ENCODE measurements at regions of chr10 and their contacts with region 1.

Region 1: DNA sequence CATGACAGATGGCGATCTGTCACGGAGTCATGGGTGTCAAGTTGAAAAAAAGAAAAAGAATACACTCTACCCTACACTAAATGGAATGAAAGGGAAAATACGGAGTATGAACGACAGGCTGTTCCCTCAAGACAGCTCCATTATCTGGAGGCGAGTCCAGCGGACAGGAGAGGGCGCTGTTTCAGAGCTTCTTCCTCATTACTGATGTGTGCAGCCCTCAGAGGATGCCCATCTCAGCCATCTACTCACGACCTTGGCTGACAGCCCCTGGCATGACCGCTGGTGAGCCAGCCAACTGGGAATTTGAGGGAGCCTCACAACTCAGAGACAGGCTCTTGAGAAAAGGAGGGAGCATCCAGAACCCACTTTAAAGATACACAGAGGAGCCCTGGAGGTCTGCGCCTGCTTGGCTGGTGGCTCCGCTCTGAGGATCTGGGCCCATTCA is 49.6 kb upstream of the SMNDC1 start:
- DNase-seq: peak; percentile 93
- H3K4me3 Mint-ChIP-seq: peak overlapping the region; percentile 82
- H3K27ac Mint-ChIP-seq: peak overlapping the region; percentile 98
- H3K4me1 Mint-ChIP-seq: peaks cover 79% of the 10 kb centered on the region
- H3K27me3 Mint-ChIP-seq: no peaks in the 10 kb centered on the region

Region 2: GRCh38 chr10:110007701-110008517 is 346.4 kb before region 1 on chr10 and contains the start of gene ADD3:
- CTCF ChIA-PET with region 1: no interaction called
- POLR2A ChIA-PET with region 1: no interaction called
- intact Hi-C with region 1: loop called (anchors 5 kb)
- DNase-seq: peak; percentile 92
- H3K4me3 Mint-ChIP-seq: no peak within 1 kb of the TSS
- H3K27ac Mint-ChIP-seq: peak within 1 kb of the TSS; percentile 81
- H3K4me1 Mint-ChIP-seq: peaks cover 40% of the 10 kb centered on the region
- H3K27me3 Mint-ChIP-seq: no peaks in the 10 kb centered on the region
- total RNA-seq, gene ADD3: 92.3 to 93.3 TPM

Region 3: DNA sequence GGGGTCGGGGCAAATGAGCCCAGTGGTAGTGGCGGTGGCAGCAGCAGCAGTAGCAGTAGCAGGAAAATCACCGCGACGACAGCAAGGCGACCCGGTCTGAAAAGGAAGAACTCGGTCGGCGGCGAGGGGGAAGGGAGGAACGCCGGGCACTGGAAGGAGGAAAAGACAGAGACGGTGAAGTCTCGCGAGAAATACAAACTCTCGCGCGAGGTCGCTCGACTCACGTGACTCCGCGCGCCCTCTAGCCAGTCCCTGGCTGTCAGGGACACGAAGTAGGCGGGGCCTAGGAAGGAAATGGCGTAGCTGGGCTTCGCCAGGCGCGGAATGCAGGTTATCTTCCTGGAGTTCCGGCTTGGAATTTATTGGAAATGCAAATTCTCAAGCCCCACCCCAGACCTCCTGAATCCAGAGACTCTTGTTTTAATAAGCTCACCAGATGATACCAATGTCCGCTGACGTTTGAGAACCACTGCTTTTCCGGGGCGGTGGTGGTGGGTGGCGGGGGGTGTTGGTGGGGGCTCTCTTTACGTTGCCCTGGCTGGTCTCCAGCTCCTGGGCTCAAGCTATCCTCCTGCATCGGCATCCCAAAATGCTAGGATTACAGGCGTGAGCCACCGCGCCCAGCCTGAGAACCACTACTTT is 49.4 kb before region 1 on chr10 and contains the start of gene SMNDC1:
- CTCF ChIA-PET with region 1: interaction called, 21 read pairs
- POLR2A ChIA-PET with region 1: interaction called, 4 read pairs
- intact Hi-C with region 1: loop called (anchors 1 kb)
- DNase-seq: peak; percentile 99
- H3K4me3 Mint-ChIP-seq: peak within 1 kb of the TSS; percentile 93
- H3K27ac Mint-ChIP-seq: peak within 1 kb of the TSS; percentile 97
- H3K4me1 Mint-ChIP-seq: peaks cover 49% of the 10 kb centered on the region
- H3K27me3 Mint-ChIP-seq: no peaks in the 10 kb centered on the region
- total RNA-seq, gene SMNDC1: 44.1 to 48.3 TPM

Region 4: DNA sequence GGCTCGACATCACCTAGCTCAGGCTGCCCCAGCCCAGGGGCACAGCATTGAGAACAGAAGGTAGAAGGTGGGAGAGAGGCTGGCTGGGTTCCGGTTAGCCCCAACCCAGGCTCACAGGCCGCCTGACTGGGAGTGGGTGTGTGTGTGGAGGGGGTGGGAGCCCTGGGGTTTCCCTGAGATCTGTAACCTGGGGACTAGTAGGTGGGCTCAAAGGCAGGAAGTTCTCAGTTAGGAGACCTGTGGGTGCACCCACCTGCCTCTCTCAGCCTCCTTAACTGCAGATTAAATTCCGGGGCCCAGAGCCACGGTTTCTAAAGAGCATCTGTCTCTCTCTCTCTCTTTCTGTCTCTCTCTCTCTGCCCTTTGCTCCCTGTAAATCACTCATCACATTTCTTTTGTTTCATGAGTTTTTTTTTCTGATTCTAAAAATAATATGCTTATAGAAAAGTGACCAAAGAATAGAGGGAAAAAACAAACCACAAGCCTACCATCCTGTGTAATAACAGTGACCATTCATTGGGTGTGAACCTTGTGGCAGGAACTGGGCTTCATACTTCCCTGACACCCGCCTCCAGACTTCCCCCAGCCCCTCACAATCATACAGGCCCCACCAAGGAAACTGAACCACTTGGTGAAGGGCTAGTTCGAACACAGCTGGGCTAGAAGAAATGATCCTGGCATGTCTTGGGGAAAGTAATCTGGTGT is 33.8 kb after region 1 on chr10:
- CTCF ChIA-PET with region 1: interaction called, 7 read pairs
- POLR2A ChIA-PET with region 1: interaction called, 4 read pairs
- intact Hi-C with region 1: loop called (anchors 1 kb)
- DNase-seq: peak; percentile 65
- H3K4me3 Mint-ChIP-seq: no peak overlapping the region
- H3K27ac Mint-ChIP-seq: peak overlapping the region; percentile 86
- H3K4me1 Mint-ChIP-seq: peaks cover 25% of the 10 kb centered on the region
- H3K27me3 Mint-ChIP-seq: no peaks in the 10 kb centered on the region

Region 5: DNA sequence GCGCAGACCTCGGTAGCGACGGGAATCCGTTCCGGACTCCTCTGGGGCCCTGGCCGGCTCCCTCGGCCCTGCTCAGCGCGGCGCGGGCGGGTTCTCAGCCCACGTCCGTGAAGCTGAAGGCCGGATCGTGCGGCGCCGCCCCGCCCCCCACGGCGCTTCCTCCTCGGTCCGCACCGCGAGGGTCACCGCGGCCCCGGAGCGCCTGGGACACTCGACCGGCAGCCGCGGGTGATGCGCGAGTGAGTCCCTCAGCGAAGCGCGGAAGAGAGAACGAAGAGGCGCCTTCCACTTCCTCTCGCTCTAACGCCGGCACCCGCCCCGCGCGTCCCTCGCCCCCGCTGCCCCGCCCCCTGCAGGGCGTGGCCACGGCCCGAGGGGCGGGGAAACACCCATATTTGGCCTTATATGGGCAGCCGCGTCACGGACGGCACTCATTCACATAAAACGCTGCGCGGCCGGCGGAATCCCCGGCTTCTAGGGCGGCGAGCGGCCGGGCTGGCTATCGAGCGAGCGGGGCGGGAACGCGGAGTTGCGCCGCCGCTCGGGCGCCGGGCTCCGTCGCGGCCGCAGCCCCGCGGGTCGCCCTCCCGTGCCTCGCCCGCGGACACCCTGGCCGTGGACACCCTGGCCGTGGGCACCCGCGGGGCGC is 143.2 kb after region 1 on chr10 and contains the start of gene DUSP5:
- CTCF ChIA-PET with region 1: interaction called, 221 read pairs
- POLR2A ChIA-PET with region 1: interaction called, 112 read pairs
- intact Hi-C with region 1: loop called (anchors 1 kb)
- DNase-seq: peak; percentile 97
- H3K4me3 Mint-ChIP-seq: peak within 1 kb of the TSS; percentile 96
- H3K27ac Mint-ChIP-seq: peak within 1 kb of the TSS; percentile 97
- H3K4me1 Mint-ChIP-seq: peaks cover 48% of the 10 kb centered on the region
- H3K27me3 Mint-ChIP-seq: no peaks in the 10 kb centered on the region
- total RNA-seq, gene DUSP5: 171 to 176 TPM

Region 6: GRCh38 chr10:110535958-110536891 is 181.9 kb after region 1 on chr10:
- CTCF ChIA-PET with region 1: interaction called, 10 read pairs
- POLR2A ChIA-PET with region 1: interaction called, 9 read pairs
- intact Hi-C with region 1: loop called (anchors 1 kb)
- DNase-seq: peak; percentile 91
- H3K4me3 Mint-ChIP-seq: peak overlapping the region; percentile 28
- H3K27ac Mint-ChIP-seq: peak overlapping the region; percentile 79
- H3K4me1 Mint-ChIP-seq: peaks cover 30% of the 10 kb centered on the region
- H3K27me3 Mint-ChIP-seq: no peaks in the 10 kb centered on the region